ENCODE measurements at regions of chr1 and their contacts with region 1.

Region 1: GRCh38 chr1:153946622-153947241 is at the start of gene DENND4B:
- DNase-seq: peak; percentile 80
- H3K4me3 Mint-ChIP-seq: peak within 1 kb of the TSS; percentile 96
- H3K27ac Mint-ChIP-seq: peak within 1 kb of the TSS; percentile 99
- H3K4me1 Mint-ChIP-seq: peaks cover 36% of the 10 kb centered on the region
- H3K27me3 Mint-ChIP-seq: peaks cover 4% of the 10 kb centered on the region

Region 2: DNA sequence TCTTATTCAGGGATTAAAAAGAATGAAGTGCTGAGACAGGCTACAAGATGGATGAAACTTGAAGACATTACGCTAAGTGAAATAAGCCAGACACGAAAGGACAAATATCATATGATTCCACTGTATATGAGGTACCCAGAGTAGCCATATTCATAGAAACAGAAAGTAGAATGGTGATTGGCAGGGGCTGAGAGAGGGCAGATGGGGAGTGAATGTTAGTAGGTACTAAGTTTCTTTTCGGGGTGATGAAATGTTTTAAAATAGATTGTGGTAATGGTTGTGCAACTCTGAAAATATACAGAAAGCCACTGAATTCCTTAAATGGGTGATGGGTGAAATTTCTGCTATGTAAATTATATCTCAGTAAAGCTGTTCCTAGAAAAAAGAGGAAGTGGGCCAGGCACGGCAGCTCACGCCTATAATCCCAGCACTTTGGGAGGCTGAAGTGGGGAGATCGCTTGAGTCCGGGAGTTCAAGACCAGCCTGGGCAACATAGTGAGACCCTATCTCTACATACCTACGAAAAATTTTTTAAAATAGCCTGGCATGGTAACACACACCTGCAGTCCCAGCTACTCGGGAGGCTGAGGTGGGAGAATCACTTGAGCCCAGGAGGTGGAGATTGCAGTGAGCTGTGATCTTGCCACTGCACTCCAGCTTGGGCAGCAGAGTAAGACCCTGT is 155.6 kb before region 1 on chr1:
- CTCF ChIA-PET with region 1: interaction called, 10 read pairs
- DNase-seq: peak; percentile 46
- H3K4me3 Mint-ChIP-seq: peak overlapping the region; percentile 3
- H3K27ac Mint-ChIP-seq: peak overlapping the region; percentile 65
- H3K4me1 Mint-ChIP-seq: peaks cover 55% of the 10 kb centered on the region
- H3K27me3 Mint-ChIP-seq: peaks cover 38% of the 10 kb centered on the region

Region 3: DNA sequence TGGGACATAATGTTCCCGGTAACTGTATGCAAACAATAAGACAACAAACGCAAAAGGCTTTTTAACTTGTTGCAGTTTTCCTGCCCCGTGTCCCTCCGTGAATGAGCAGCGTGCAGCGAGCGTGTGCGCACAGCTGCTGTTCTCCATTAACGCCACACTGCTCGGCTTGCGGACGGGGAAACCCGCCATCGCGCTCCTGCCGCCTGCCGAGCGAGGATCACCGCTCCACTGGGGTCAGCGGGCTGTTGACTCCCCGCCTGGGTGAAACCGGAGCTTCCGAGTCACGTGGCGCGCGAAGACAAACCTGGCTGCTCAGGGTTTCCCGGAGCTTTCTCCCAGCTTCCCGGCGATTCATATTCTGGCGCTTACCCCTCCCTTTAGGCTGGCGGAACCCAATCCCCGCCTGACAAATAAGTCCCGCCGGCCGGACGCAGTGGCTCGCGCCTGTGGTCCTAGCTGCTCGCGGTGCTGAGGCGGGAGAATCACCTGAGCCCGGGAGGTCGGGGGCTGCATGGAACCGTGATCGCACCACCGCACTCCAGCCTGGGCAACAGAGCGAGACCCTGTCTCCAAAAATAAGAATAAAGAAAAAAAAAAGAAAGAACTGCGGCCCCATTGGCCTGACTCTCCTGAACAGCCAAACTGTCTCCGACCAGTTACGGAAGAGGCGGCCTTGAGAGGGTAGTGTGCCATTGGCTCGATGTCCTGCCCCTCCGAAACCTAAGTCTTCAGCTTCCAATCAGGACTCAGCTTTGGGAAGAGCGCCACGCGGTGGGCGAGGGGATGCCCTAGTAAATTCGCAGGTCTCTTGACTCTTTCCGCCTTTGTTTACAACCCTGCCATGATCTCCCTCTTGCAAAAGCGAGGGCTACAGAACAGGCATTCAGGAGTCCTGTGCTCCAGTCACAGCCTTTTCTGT is 20.6 kb after region 1 on chr1 and contains the start of gene CREB3L4:
- CTCF ChIA-PET with region 1: interaction called, 18 read pairs
- DNase-seq: peak; percentile 92
- H3K4me3 Mint-ChIP-seq: peak within 1 kb of the TSS; percentile 89
- H3K27ac Mint-ChIP-seq: peak within 1 kb of the TSS; percentile 94
- H3K4me1 Mint-ChIP-seq: peaks cover 68% of the 10 kb centered on the region
- H3K27me3 Mint-ChIP-seq: no peaks in the 10 kb centered on the region

Measured in activated naive CD4-positive, alpha-beta T cell treated with anti-CD3 and anti-CD28 coated beads, Interleukin-2, amount 10 ng/mL, durations not matched to agents 7 days and 5 days (primary cell).